ENCODE measurements at regions of chr7 and their contacts with region 1.

Region 1: GRCh38 chr7:66628361-66629140 is at the start of gene KCTD7:
- DNase-seq: peak; percentile 100
- H3K4me3 ChIP-seq: peak within 1 kb of the TSS; percentile 75 to 97 (median 84)
- H3K27ac ChIP-seq: peak within 1 kb of the TSS; percentile 97 to 100 (median 98)
- H3K4me1 ChIP-seq: peaks cover 11 to 42% (median 37%) of the 10 kb centered on the region in 4 donors
- H3K27me3 ChIP-seq: no peaks in the 10 kb centered on the region
- CTCF ChIP-seq: no peak
- EP300 ChIP-seq: no peak
- POLR2A ChIP-seq: peak; percentile 98
- total RNA-seq, gene KCTD7: 9.4 to 22.5 (median 15.1) TPM

Region 2: GRCh38 chr7:66591799-66592596 is 36.6 kb before region 1 on chr7:
- intact Hi-C with region 1: loop called (anchors 2 kb)
- DNase-seq: peak; percentile 97
- H3K4me3 ChIP-seq: peak overlapping the region; percentile 68 to 92 (median 84)
- H3K27ac ChIP-seq: peak overlapping the region; percentile 94 to 97 (median 96)
- H3K4me1 ChIP-seq: peaks cover 31 to 51% (median 44%) of the 10 kb centered on the region in 4 donors
- H3K27me3 ChIP-seq: no peaks in the 10 kb centered on the region
- CTCF ChIP-seq: no peak
- EP300 ChIP-seq: no peak
- POLR2A ChIP-seq: peak; percentile 98

Measured in esophagus muscularis mucosa (tissue), 4 donors.